ENCODE measurements at regions of chr1 and their contacts with region 1.

Region 1: GRCh38 chr1:232805269-232806185 is at the start of gene MAP10:
- DNase-seq: peak; percentile 74
- H3K4me3 Mint-ChIP-seq: peak within 1 kb of the TSS; percentile 89
- H3K27ac Mint-ChIP-seq: peak within 1 kb of the TSS; percentile 88
- H3K4me1 Mint-ChIP-seq: peaks cover 31% of the 10 kb centered on the region
- H3K27me3 Mint-ChIP-seq: peaks cover 9% of the 10 kb centered on the region
- total RNA-seq, gene MAP10: 3.3 and 3.4 TPM in 2 replicates

Region 2: GRCh38 chr1:233113009-233113879 is 307.7 kb after region 1 on chr1:
- intact Hi-C with region 1: loop called (anchors 2 kb)
- DNase-seq: peak; percentile 52
- H3K4me3 Mint-ChIP-seq: peak overlapping the region; percentile 52
- H3K27ac Mint-ChIP-seq: peak overlapping the region; percentile 89
- H3K4me1 Mint-ChIP-seq: peaks cover 55% of the 10 kb centered on the region
- H3K27me3 Mint-ChIP-seq: no peaks in the 10 kb centered on the region